ENCODE measurements at regions of chr2 and their contacts with region 1.

Region 1: DNA sequence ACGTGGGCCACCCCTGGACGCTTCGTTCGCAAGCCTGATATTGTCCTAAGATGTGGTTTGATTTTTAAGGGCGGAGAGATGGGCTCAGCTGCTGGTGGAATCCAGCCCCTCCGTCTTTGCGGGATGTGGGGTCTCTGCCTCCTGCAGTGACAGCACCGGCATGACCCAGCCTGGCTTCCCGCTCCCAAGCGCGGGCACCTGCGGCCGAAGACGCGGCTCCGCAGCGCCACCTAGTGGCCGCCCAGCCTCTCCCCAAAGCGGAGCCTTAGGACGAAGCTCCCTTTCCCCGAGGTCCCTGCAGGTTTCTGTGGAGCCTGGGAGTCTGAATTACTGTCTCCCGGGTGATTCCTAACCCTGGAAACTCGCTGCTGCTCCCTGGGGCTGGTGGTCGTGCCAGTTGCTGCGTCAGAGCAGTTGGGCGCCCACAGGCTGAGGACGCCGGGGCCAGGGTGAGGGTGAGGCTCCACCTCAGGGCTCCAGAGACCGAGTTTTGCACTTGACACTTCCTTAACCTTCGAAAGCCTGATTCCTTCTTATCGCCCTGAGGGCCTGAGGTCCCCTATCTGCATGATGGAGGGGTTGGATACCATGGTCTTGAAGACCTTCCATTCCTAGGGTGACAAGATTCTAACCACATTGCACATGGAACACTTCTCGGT is 137.5 kb downstream of the TPO start:
- DNase-seq: no peak
- H3K4me3 ChIP-seq: no peak overlapping the region
- H3K27me3 ChIP-seq: no peaks in the 10 kb centered on the region; the same call in 1 of the 2 replicates
- CTCF ChIP-seq: peak; percentile 98

Region 2: DNA sequence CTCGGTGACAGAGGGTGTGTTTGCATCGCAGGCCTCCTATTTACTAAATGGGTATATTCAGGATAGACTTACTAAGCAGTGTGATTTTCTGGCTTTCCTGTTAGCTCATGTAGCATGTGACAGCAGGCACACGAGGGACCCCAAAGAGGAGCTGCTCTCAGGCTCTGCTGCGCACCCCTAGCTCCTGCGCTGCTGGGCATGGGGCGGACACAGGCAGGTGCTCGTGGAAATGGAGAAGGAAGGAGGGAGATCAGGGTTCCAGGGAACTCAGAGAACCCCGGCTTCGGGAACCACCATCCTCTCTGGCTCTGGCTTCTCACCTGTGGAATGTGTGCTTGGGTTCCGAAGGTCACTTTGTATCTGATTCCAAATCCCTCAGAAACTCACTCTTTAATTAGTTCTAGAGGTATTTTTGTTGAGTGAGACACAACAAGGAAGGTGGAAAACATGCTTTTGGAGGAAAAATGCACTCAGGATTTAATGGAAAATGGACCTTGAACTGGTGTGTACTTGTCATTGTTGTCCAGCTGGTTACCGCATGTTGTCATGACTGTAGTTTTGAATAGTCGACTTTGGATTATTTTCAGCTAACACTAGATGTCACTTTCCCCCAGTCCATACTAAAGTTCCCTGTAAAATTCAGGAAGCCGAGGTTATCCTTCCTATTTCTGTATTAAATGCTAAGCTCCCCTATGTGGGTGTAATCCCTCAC is 596.7 kb before region 1 on chr2:
- CTCF ChIA-PET with region 1: interaction called, 50 read pairs
- POLR2A ChIA-PET with region 1: no interaction called
- DNase-seq: peak; percentile 9
- H3K4me3 ChIP-seq: no peak overlapping the region
- H3K27me3 ChIP-seq: 0 out of 2 replicates have a peak, but pooled peaks cover 1% of the 10 kb centered on the region
- CTCF ChIP-seq: peak; percentile 49

Region 3: GRCh38 chr2:1262609-1263008 is 288.2 kb before region 1 on chr2:
- CTCF ChIA-PET with region 1: no interaction called
- POLR2A ChIA-PET with region 1: no interaction called
- DNase-seq: no peak
- H3K4me3 ChIP-seq: no peak overlapping the region
- H3K27me3 ChIP-seq: no peaks in the 10 kb centered on the region
- CTCF ChIP-seq: no peak

Region 4: DNA sequence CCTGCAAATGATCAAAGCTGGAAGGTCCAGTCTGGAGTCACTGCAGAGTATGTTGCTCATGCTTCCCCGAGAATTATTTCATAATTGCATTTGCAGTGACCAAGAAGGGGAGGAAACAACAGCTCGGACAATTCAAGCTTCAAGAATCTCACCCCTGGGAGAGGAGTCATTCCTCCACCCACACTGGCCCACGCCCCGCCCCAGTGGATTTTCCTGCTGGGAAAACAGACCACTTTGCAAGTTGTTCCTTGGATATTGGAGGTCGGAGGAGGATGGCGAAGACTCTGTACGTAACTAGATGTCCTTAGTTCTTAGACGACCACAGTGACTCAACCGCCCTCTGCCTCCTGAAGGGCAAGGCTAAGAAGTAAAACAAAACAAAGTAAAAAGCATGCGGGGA is 21.9 kb after region 1 on chr2:
- CTCF ChIA-PET with region 1: interaction called, 17 read pairs
- POLR2A ChIA-PET with region 1: no interaction called
- DNase-seq: peak; percentile 14
- H3K4me3 ChIP-seq: no peak overlapping the region
- H3K27me3 ChIP-seq: peaks cover 3% of the 10 kb centered on the region
- CTCF ChIP-seq: no peak

Region 5: DNA sequence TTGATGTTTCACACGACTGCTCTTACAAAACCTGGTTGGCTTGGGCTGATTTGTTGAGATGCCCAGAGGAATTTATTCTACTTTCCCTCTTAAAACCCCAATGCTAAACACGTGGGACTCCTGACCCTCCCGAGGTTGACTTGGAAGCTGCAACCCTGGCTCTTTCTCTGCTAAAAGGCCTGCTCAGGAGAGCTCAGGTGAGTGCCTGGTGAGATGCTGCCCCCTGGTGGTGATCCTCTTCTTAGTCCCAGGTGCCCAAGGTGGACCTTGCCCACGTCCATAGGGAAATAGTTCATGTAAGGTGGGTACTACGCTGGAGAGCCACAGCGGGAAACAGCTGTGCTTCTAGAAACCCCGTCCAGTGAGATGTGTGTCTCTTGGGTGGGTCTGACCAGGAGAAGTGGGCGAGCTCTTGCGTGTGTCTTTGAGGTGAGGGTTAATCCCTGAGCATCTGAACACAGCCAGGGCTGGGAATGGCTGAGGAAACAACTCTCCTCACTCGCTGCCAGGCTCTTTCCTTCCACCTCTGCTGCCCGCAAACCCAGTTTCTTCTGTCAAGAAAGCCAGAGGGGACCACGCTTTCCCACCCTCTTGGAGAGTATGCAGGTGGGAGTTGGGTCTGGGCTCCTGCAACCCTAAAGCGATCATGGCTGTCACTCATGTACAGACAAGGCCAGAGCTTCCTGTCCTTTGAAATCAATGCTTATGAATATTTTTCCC is 219.1 kb after region 1 on chr2:
- CTCF ChIA-PET with region 1: interaction called, 14 read pairs
- POLR2A ChIA-PET with region 1: no interaction called
- DNase-seq: no peak
- H3K4me3 ChIP-seq: no peak overlapping the region
- H3K27me3 ChIP-seq: peaks cover 1% of the 10 kb centered on the region; the same call in 1 of the 2 replicates
- CTCF ChIP-seq: peak; percentile 80